Natural killer cell (primary cell): ENCODE measurements at regions of chr14 and their contacts with region 1.

Region 1: GRCh38 chr14:69657950-69658355 is 46.6 kb downstream of the SUSD6 start:
- DNase-seq: no peak
- ATAC-seq: no peak
- H3K4me3 ChIP-seq: no peak overlapping the region
- H3K4me3 Mint-ChIP-seq: no peak overlapping the region
- H3K27ac ChIP-seq: no peak overlapping the region
- H3K27ac Mint-ChIP-seq: peak overlapping the region; percentile 51 to 87
- H3K4me1 ChIP-seq: peaks cover 36% of the 10 kb centered on the region
- H3K4me1 Mint-ChIP-seq: peaks cover 96 to 100% of the 10 kb centered on the region in 2 donors
- H3K27me3 ChIP-seq: no peaks in the 10 kb centered on the region
- H3K27me3 Mint-ChIP-seq: no peaks in the 10 kb centered on the region
- CTCF ChIP-seq: no peak

Region 2: GRCh38 chr14:69619012-69619411 is 38.9 kb before region 1 on chr14:
- intact Hi-C with region 1: loop called (anchors 2 kb)
- DNase-seq: no peak
- ATAC-seq: no peak
- H3K4me3 ChIP-seq: no peak overlapping the region
- H3K4me3 Mint-ChIP-seq: no peak overlapping the region
- H3K27ac ChIP-seq: peak overlapping the region; percentile 21
- H3K27ac Mint-ChIP-seq: peak overlapping the region; percentile 95 to 96
- H3K4me1 ChIP-seq: peaks cover 55% of the 10 kb centered on the region
- H3K4me1 Mint-ChIP-seq: peaks cover 84 to 94% of the 10 kb centered on the region in 2 donors
- H3K27me3 ChIP-seq: no peaks in the 10 kb centered on the region
- H3K27me3 Mint-ChIP-seq: no peaks in the 10 kb centered on the region
- CTCF ChIP-seq: no peak